ENCODE measurements at regions of chr3 and their contacts with region 1.

Region 1: DNA sequence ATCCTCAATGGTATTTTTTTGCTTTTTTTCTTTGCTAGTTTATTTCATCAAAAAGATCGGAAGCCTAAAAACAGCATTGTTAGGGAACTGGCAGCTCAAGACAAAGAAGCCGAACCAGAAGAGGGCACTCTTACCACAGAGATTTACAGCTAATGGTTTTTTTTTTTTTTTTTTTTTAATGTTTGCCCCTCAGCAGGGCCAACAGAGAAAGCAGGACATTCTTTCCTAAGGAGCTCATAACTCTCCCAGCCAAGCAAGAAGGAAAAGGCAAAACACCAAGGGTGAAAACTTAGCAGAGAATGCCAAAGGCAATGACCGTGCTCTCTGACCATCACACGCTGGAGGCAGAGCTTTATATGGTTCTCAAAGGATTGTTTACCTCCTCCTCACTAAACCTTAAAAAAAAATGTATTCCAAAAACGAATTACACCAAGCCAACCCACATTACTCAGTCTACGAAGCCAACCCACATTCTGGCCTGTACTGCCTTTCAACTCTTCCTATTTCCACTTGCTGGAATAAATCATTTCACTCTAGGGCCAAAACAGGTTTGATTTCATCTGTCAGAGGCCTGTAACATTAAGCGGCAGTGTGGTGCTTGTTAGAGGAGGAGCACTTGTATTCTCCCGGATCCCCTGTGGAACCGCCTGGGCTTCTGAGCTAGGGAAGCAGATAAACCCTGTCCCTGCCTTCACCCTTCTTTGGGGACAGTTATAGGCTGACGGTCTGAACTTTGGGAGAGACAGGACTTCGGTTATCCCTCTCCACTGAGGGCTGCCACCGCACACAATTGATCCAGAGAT is 35.6 kb upstream of the GYG1 start:
- DNase-seq: no peak
- H3K4me3 Mint-ChIP-seq: no peak overlapping the region
- H3K27ac Mint-ChIP-seq: no peak overlapping the region
- H3K4me1 Mint-ChIP-seq: peaks cover 9% of the 10 kb centered on the region
- H3K27me3 Mint-ChIP-seq: no peaks in the 10 kb centered on the region

Region 2: DNA sequence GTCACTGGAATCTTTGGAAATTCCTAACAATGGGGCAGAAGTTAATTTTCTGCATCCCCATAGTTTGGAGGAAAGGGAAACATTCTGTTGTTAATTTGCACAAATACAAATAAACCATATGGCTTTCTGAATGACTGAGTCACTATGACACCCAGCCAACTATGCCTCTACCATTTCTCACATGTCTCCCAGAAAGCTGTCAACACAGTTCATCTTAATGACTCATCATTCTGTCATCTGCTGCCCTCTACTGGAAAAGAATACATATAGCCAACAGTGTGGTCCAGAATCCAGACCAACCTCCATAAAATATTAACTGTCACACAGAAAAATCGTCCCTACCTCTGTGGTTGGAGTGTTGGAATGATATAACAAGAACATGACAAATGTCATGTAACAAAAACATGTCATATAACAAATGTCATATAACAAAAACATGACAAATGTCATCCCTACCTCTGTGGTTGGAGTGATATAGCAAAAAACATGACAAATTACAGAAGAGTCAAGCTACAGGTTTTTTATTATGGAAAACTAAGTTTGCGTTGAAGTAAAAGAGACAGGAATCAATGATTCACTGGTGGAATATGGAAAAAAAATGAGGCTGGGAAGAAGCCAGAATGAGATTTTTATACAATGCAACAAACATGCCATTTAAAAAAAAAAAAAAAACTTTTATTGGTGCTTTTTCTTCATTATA is 12.1 kb before region 1 on chr3:
- CTCF ChIA-PET with region 1: interaction called, 22 read pairs
- POLR2A ChIA-PET with region 1: no interaction called
- intact Hi-C with region 1: no loop called
- DNase-seq: no peak
- H3K4me3 Mint-ChIP-seq: no peak overlapping the region
- H3K27ac Mint-ChIP-seq: no peak overlapping the region
- H3K4me1 Mint-ChIP-seq: no peaks in the 10 kb centered on the region
- H3K27me3 Mint-ChIP-seq: peaks cover 1% of the 10 kb centered on the region

Region 3: DNA sequence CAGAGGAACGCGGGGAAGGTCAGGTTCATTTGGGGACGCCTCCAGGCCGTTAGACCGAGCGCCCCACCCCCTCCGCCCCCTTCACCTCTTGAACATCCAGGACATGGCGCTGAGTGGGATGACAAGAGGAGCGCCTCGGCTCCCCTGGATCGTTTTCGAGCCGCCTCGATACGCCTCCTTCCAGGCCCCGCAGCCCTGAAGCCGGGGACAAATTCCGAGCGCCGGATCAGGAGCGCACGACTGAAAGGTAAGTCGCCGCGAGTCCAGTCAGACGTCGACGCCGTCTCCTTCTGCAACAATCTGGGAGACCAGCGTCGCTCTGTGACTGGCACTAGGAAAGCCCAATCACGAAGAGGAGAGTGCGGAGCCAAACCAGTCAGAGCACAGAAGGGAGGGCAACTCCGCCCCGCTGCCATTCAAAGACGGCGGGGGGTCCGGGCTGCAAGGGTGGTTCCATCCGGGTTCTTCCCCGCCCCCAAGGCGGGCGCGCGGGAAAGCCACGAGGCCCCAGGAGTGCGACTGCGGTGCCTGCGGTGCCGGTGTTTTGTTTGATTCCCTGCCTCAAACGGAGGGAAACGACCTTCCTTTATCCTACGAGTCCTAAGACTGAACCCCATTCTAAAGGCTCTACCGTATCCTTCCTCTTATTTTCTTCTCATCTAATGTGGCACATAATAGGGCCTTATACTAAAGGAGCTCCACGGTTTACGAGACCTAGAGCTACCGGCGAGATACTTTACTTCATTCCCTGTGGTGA is 130.7 kb after region 1 on chr3 and contains the start of gene HLTF:
- CTCF ChIA-PET with region 1: interaction called, 4 read pairs
- POLR2A ChIA-PET with region 1: no interaction called
- intact Hi-C with region 1: loop called (anchors 1 kb)
- DNase-seq: peak; percentile 93
- H3K4me3 Mint-ChIP-seq: peak within 1 kb of the TSS; percentile 95
- H3K27ac Mint-ChIP-seq: peak within 1 kb of the TSS; percentile 56
- H3K4me1 Mint-ChIP-seq: peaks cover 16% of the 10 kb centered on the region
- H3K27me3 Mint-ChIP-seq: no peaks in the 10 kb centered on the region
- total RNA-seq, gene HLTF: 22.3 to 25.1 TPM

Region 4: GRCh38 chr3:149120051-149120972 is 164.6 kb after region 1 on chr3:
- CTCF ChIA-PET with region 1: interaction called, 33 read pairs
- POLR2A ChIA-PET with region 1: no interaction called
- intact Hi-C with region 1: loop called (anchors 1 kb)
- DNase-seq: no peak
- H3K4me3 Mint-ChIP-seq: no peak overlapping the region
- H3K27ac Mint-ChIP-seq: no peak overlapping the region
- H3K4me1 Mint-ChIP-seq: no peaks in the 10 kb centered on the region
- H3K27me3 Mint-ChIP-seq: peaks cover 4% of the 10 kb centered on the region

Region 5: DNA sequence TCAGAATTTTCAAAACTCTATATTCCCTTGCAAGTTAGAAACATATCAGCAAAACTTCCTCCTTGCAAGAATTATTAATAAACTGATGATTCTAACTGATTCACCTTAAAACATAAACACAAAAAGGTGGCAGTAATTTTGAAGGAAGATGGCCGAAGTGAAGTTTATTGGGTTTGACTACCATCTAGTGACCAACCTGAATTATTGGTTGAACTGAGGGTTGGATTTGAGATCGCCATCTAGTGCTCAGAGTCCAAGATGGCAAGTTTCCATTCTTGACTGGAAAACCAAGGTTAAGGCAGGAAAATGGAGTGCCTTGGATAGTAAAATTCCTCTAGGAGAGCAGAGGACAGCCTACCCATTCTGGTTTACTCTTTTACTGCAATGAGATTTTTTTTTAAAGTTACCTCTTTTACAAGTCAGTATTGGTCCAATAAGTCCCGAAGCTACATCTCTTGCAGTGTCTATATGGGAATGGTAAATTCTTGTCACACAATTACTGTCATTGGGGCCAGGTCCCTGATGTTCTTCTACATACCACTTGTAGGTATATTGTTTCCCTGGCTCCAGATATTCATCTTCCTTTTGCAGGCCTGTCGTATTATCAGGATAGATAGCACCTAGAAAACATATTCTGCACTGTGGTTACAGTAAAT is 317.5 kb after region 1 on chr3:
- CTCF ChIA-PET with region 1: interaction called, 70 read pairs
- POLR2A ChIA-PET with region 1: no interaction called
- intact Hi-C with region 1: loop called (anchors 1 kb)
- DNase-seq: peak; percentile 26
- H3K4me3 Mint-ChIP-seq: no peak overlapping the region
- H3K27ac Mint-ChIP-seq: no peak overlapping the region
- H3K4me1 Mint-ChIP-seq: peaks cover 9% of the 10 kb centered on the region
- H3K27me3 Mint-ChIP-seq: no peaks in the 10 kb centered on the region

Region 6: GRCh38 chr3:149314807-149315578 is 359.2 kb after region 1 on chr3:
- CTCF ChIA-PET with region 1: no interaction called
- POLR2A ChIA-PET with region 1: no interaction called
- intact Hi-C with region 1: no loop called
- DNase-seq: no peak
- H3K4me3 Mint-ChIP-seq: no peak overlapping the region
- H3K27ac Mint-ChIP-seq: no peak overlapping the region
- H3K4me1 Mint-ChIP-seq: no peaks in the 10 kb centered on the region
- H3K27me3 Mint-ChIP-seq: peaks cover 19% of the 10 kb centered on the region

Region 7: GRCh38 chr3:149480325-149481017 is 524.7 kb after region 1 on chr3:
- CTCF ChIA-PET with region 1: no interaction called
- POLR2A ChIA-PET with region 1: no interaction called
- intact Hi-C with region 1: loop called (anchors 10 kb)
- DNase-seq: peak; percentile 66
- H3K4me3 Mint-ChIP-seq: no peak overlapping the region
- H3K27ac Mint-ChIP-seq: no peak overlapping the region
- H3K4me1 Mint-ChIP-seq: no peaks in the 10 kb centered on the region
- H3K27me3 Mint-ChIP-seq: no peaks in the 10 kb centered on the region

Measured in activated CD4-positive, alpha-beta memory T cell treated with anti-CD3 and anti-CD28 coated beads for 36 hours (primary cell).